Gastrocnemius medialis (tissue), 4 donors: ENCODE measurements at regions of chr3 and their contacts with region 1.

Region 1: DNA sequence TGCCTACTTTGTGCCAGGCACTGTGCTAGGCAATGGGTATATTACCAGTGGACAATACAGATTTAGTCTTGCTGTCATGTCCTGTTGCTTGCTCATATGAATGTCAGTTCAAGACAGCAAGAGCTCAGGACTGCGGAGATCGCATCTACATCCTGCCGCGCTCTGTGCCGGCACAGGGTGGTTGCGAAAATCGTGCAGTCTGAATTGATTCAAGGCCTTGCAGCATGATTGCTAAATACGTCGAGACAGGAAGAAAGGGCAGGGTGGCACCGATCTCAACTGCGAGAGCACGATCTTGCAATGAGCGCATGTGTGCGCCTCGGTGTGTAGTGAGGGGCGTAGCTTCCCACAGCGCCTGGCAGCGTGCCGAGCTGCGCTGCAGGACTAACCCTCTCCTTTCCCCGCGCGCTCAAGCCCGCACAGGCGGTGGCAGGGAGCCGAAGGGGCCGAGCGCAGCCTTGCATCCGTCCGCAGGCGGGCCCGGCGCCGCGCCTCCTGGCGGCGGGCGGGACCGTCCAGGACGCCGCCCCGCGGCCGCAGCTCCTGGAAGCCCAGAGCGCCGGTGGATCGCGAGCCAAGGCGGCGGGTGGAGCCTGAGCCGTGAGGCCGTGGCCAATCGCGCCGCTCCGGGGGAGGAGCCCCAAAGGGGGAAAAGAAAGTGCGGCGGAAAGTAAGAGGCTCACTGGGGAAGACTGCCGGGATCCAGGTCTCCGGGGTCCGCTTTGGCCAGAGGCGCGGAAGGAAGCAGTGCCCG is at the start of gene IL1RAP:
- DNase-seq: peak; percentile 74 to 81
- ATAC-seq: peak; percentile 87 to 90
- H3K4me3 ChIP-seq: peak within 1 kb of the TSS; percentile 69 to 90 (median 80)
- H3K27ac ChIP-seq: peak within 1 kb of the TSS; percentile 63 to 77 (median 72)
- H3K4me1 ChIP-seq: peaks cover 3 to 8% of the 10 kb centered on the region in 2 donors
- H3K27me3 ChIP-seq: no peaks in the 10 kb centered on the region
- CTCF ChIP-seq: peak in 4 of 5 experiments; percentile 74 to 91 (median 82)
- POLR2A ChIP-seq: peak; percentile 64 to 73
- total RNA-seq, gene IL1RAP: 1.1 to 3.3 (median 2.6) TPM

Region 2: GRCh38 chr3:190497811-190498210 is 15.8 kb before region 1 on chr3:
- in situ Hi-C with region 1: no loop called
- intact Hi-C with region 1: loop called (anchors 2 kb)
- DNase-seq: peak in 1 of 2 donors; percentile 14
- ATAC-seq: peak; percentile 60 to 69
- H3K4me3 ChIP-seq: no peak overlapping the region
- H3K27ac ChIP-seq: peak overlapping the region in 3 of 4 donors; percentile 16 to 23 (median 22)
- H3K4me1 ChIP-seq: peaks cover 0 to 14% of the 10 kb centered on the region in 2 donors
- H3K27me3 ChIP-seq: no peaks in the 10 kb centered on the region
- CTCF ChIP-seq: no peak
- POLR2A ChIP-seq: no peak

Region 3: GRCh38 chr3:190552969-190553759 is 39.6 kb after region 1 on chr3:
- in situ Hi-C with region 1: no loop called
- intact Hi-C with region 1: no loop called
- DNase-seq: no peak
- ATAC-seq: no peak
- H3K4me3 ChIP-seq: no peak overlapping the region
- H3K27ac ChIP-seq: no peak overlapping the region
- H3K4me1 ChIP-seq: no peaks in the 10 kb centered on the region
- H3K27me3 ChIP-seq: no peaks in the 10 kb centered on the region
- CTCF ChIP-seq: no peak
- POLR2A ChIP-seq: no peak

Region 4: DNA sequence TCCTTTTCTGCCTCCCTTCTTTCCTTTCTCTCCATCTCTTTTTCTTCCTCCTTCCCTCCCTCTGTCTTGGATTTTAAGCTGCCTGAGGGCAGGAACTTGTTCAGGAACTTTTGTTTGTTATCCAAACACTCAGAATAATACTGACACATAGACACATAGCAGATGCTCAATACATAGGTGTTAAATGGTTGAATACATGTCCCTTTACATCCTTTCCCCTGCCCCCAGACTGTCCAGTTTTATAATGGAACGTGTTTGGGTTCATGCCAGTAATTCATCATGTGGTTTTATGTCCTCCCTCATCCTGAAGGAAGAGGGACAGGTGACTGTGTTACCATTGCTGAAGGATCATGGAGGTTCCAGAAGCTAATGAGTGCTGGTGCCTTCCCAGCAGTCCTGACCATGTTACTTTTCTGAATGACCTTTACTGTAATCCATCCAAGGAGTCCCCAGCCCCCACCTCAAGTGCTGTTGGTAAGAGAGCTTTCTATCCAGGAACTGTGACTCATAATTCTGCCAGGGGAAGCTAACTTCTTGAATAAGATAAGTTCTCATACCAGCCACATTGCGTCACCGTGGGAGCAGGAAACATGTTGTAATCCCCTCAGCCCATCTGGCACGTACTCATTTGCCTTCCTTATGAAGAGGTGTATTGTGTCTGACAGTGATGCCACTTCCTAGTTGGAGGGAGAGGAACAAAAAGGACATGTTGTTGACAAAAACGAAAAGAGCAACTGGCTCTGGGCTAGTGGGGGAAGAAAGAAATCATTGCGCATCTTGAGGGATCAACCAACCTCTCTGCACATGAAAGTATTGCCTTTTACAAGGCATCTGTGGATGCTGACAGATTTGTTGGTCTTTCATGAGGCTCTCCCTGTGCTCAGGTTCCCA is 52.7 kb after region 1 on chr3:
- in situ Hi-C with region 1: no loop called
- intact Hi-C with region 1: loop called (anchors 5 kb)
- DNase-seq: peak; percentile 54 to 85
- ATAC-seq: peak; percentile 92 to 94
- H3K4me3 ChIP-seq: no peak overlapping the region
- H3K27ac ChIP-seq: peak overlapping the region in 2 of 4 donors; percentile 29 to 62
- H3K4me1 ChIP-seq: peaks cover 4 to 7% of the 10 kb centered on the region in 2 donors
- H3K27me3 ChIP-seq: no peaks in the 10 kb centered on the region
- CTCF ChIP-seq: no peak
- POLR2A ChIP-seq: no peak

Region 5: GRCh38 chr3:190701096-190701532 is 187.5 kb after region 1 on chr3:
- in situ Hi-C with region 1: no loop called
- intact Hi-C with region 1: loop called (anchors 10 kb)
- DNase-seq: no peak
- ATAC-seq: no peak
- H3K4me3 ChIP-seq: no peak overlapping the region
- H3K27ac ChIP-seq: no peak overlapping the region
- H3K4me1 ChIP-seq: no peaks in the 10 kb centered on the region
- H3K27me3 ChIP-seq: no peaks in the 10 kb centered on the region
- CTCF ChIP-seq: peak in 1 of 5 experiments; percentile 22
- POLR2A ChIP-seq: no peak

Region 6: DNA sequence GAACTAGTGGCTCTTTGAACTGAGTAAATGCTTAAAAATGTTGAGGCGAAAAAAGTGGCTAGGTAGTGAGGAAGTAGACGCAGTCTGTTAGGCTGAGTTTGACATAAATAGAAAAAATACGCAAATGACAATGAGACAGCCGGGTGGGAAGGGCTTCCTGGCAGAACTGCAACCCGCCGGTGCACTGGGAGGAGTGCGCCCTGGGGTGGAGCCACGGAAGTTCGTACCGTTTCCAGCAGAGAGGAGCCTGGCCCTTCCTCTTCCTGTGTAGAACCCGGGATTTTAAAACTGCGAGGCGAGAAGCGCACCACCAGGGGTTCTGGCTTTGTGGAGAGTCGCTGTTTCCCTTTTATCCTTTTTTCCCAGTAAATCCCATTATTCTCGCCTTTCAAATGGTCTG is 1550.0 kb after region 1 on chr3:
- in situ Hi-C with region 1: no loop called
- intact Hi-C with region 1: no loop called
- DNase-seq: no peak
- ATAC-seq: no peak
- H3K4me3 ChIP-seq: no peak overlapping the region
- H3K27ac ChIP-seq: no peak overlapping the region
- H3K4me1 ChIP-seq: no peaks in the 10 kb centered on the region
- H3K27me3 ChIP-seq: no peaks in the 10 kb centered on the region
- CTCF ChIP-seq: no peak
- POLR2A ChIP-seq: no peak